ENCODE measurements at regions of chr6 and their contacts with region 1.

Region 1: DNA sequence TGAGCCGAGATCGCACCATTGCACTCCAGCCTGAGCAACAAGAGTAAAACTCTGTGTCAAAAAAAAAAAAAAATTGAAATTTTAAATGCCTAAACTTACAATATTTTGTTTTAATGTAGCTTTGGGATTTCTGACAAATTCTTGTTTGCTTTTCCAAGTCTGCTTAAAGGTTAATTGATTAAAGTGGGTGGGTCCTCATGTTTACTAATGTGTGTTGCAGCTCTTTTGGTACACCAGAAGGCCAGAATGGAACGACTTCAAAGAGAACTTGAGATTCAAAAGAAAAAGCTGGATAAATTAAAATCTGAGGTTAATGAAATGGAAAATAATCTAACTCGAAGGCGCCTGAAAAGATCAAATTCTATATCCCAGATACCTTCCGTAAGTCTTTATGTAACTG is 2.7 kb upstream of the SUMO4 start:
- DNase-seq: no peak
- ATAC-seq: no peak
- H3K4me3 ChIP-seq: no peak overlapping the region
- H3K4me3 Mint-ChIP-seq: no peak overlapping the region
- H3K27ac ChIP-seq: no peak overlapping the region
- H3K27ac Mint-ChIP-seq: peak overlapping the region; percentile 42
- H3K4me1 ChIP-seq: peaks cover 2% of the 10 kb centered on the region
- H3K4me1 Mint-ChIP-seq: peaks cover 47% of the 10 kb centered on the region
- H3K27me3 ChIP-seq: no peaks in the 10 kb centered on the region
- H3K27me3 Mint-ChIP-seq: no peaks in the 10 kb centered on the region
- CTCF ChIP-seq: no peak

Region 2: GRCh38 chr6:149450679-149451360 is 53.4 kb after region 1 on chr6:
- CTCF ChIA-PET with region 1: no interaction called
- POLR2A ChIA-PET with region 1: no interaction called
- intact Hi-C with region 1: loop called in 1 of 2 experiments (anchors 2 kb)
- DNase-seq: no peak
- ATAC-seq: no peak
- H3K4me3 ChIP-seq: no peak overlapping the region
- H3K4me3 Mint-ChIP-seq: peak overlapping the region; percentile 15
- H3K27ac ChIP-seq: no peak overlapping the region
- H3K27ac Mint-ChIP-seq: no peak overlapping the region
- H3K4me1 ChIP-seq: peaks cover 12% of the 10 kb centered on the region
- H3K4me1 Mint-ChIP-seq: no peaks in the 10 kb centered on the region
- H3K27me3 ChIP-seq: no peaks in the 10 kb centered on the region
- H3K27me3 Mint-ChIP-seq: no peaks in the 10 kb centered on the region
- CTCF ChIP-seq: no peak

Region 3: GRCh38 chr6:149717588-149718458 is 320.4 kb after region 1 on chr6 and contains the start of gene LATS1:
- CTCF ChIA-PET with region 1: no interaction called
- POLR2A ChIA-PET with region 1: no interaction called
- intact Hi-C with region 1: no loop called
- DNase-seq: peak; percentile 85 to 94 (median 89)
- ATAC-seq: peak; percentile 87
- H3K4me3 ChIP-seq: peak within 1 kb of the TSS; percentile 84
- H3K4me3 Mint-ChIP-seq: peak within 1 kb of the TSS; percentile 100
- H3K27ac ChIP-seq: peak within 1 kb of the TSS; percentile 92 to 95
- H3K27ac Mint-ChIP-seq: peak within 1 kb of the TSS; percentile 99
- H3K4me1 ChIP-seq: peaks cover 21% of the 10 kb centered on the region
- H3K4me1 Mint-ChIP-seq: peaks cover 47% of the 10 kb centered on the region
- H3K27me3 ChIP-seq: no peaks in the 10 kb centered on the region
- H3K27me3 Mint-ChIP-seq: no peaks in the 10 kb centered on the region
- CTCF ChIP-seq: no peak
- total RNA-seq, gene LATS1: 36.1 to 39.6 TPM